PC-9 (cell line): ENCODE measurements at regions of chr12 and their contacts with region 1.

Region 1: GRCh38 chr12:85155787-85156186 is 119.6 kb downstream of the LRRIQ1 start:
- DNase-seq: no peak
- H3K4me3 ChIP-seq: no peak overlapping the region
- H3K27ac ChIP-seq: no peak overlapping the region
- H3K4me1 ChIP-seq: no peaks in the 10 kb centered on the region
- H3K27me3 ChIP-seq: no peaks in the 10 kb centered on the region
- CTCF ChIP-seq: peak; percentile 62

Region 2: DNA sequence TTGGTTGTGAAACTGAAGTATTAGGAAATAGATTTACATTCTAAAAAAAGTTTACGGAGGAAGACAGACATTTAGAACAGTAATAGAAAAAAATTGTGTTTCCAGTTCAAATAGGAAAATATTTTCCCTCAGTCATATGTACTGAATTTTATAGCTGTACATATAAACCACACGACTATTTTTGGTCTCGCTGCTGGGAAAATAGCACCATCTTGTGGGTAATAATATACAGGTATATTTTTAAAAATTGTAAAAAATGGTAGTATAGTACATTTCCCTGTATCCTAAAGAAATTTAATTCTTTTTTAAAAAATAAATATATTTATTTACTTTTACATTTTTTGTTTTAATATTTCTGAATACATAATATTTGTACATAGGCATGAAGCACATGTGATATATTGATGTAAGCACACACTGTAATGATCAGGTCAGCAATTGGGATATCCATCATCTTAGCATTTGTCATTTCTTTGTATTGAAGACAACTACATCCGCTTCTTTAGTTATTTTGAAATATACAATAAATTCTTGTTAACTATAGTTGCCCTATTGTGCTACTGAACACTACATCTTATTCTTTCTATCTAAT is 292.9 kb after region 1 on chr12:
- CTCF ChIA-PET with region 1: interaction called, 3 read pairs
- POLR2A ChIA-PET with region 1: no interaction called
- intact Hi-C with region 1: loop called (anchors 5 kb)
- DNase-seq: no peak
- H3K4me3 ChIP-seq: no peak overlapping the region
- H3K27ac ChIP-seq: no peak overlapping the region
- H3K4me1 ChIP-seq: no peaks in the 10 kb centered on the region
- H3K27me3 ChIP-seq: no peaks in the 10 kb centered on the region
- CTCF ChIP-seq: peak; percentile 64

Region 3: GRCh38 chr12:85920324-85920947 is 764.6 kb after region 1 on chr12:
- CTCF ChIA-PET with region 1: no interaction called
- POLR2A ChIA-PET with region 1: no interaction called
- intact Hi-C with region 1: loop called (anchors 5 kb)
- DNase-seq: no peak
- H3K4me3 ChIP-seq: no peak overlapping the region
- H3K27ac ChIP-seq: no peak overlapping the region
- H3K4me1 ChIP-seq: no peaks in the 10 kb centered on the region
- H3K27me3 ChIP-seq: no peaks in the 10 kb centered on the region
- CTCF ChIP-seq: peak; percentile 77

Region 4: GRCh38 chr12:86158956-86159355 is 1003.2 kb after region 1 on chr12:
- CTCF ChIA-PET with region 1: interaction called, 10 read pairs
- POLR2A ChIA-PET with region 1: no interaction called
- intact Hi-C with region 1: no loop called
- DNase-seq: no peak
- H3K4me3 ChIP-seq: no peak overlapping the region
- H3K27ac ChIP-seq: no peak overlapping the region
- H3K4me1 ChIP-seq: no peaks in the 10 kb centered on the region
- H3K27me3 ChIP-seq: no peaks in the 10 kb centered on the region
- CTCF ChIP-seq: no peak